Mucosa of descending colon (tissue), 3 donors: ENCODE measurements at regions of chr1 and their contacts with region 1.

Region 1: GRCh38 chr1:186212544-186213226 is 162.4 kb downstream of the TPR start:
- DNase-seq: peak in 1 of 3 donors; percentile 33
- ATAC-seq: peak; percentile 81
- H3K4me3 ChIP-seq: no peak overlapping the region
- H3K4me1 ChIP-seq: no peaks in the 10 kb centered on the region
- CTCF ChIP-seq: peak; percentile 48

Region 2: GRCh38 chr1:185200889-185201288 is 1011.8 kb before region 1 on chr1:
- intact Hi-C with region 1: no loop called
- DNase-seq: no peak
- ATAC-seq: no peak
- H3K4me3 ChIP-seq: no peak overlapping the region
- H3K4me1 ChIP-seq: no peaks in the 10 kb centered on the region
- CTCF ChIP-seq: no peak

Region 3: DNA sequence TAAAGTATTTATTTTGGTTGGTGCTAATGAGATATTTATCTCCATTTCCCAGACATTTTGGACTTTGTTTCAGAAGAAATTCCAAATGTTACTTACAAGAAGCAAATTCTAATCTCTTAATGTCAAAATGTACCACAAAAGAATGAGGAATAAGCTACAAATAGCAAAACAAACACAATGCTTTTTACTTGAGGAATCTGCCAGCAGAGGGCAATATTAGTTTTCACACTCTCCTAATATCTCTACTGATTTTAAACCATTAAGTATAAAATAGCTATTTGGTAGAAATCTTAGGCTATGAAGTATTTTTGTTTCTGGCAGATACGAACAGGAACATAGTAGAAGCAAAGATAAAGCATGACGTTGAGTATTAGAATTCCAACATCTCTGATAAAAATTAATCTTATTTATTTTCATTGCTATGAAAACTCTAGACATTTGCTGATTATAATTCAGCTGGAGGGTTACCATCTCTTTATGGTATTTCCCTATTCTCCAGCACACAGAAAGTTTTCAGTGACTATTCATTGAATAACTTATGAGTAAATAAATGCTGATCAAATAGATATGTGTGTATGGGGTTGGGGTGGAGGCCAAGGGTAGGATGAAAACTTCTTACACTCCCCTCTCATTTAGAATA is 491.9 kb before region 1 on chr1:
- intact Hi-C with region 1: loop called in 1 of 2 experiments (anchors 10 kb)
- DNase-seq: no peak
- ATAC-seq: no peak
- H3K4me3 ChIP-seq: no peak overlapping the region
- H3K4me1 ChIP-seq: no peaks in the 10 kb centered on the region
- CTCF ChIP-seq: no peak